ENCODE measurements at regions of chr10 and their contacts with region 1.

Region 1: GRCh38 chr10:67764012-67764822 is 68.2 kb upstream of the CTNNA3 start:
- DNase-seq: peak; percentile 93
- H3K4me3 Mint-ChIP-seq: peak overlapping the region; percentile 82
- H3K27ac Mint-ChIP-seq: peak overlapping the region; percentile 75
- H3K4me1 Mint-ChIP-seq: no peaks in the 10 kb centered on the region
- H3K27me3 Mint-ChIP-seq: no peaks in the 10 kb centered on the region
- CTCF ChIP-seq: no peak

Region 2: GRCh38 chr10:67602268-67602950 is 161.8 kb before region 1 on chr10:
- CTCF ChIA-PET with region 1: no interaction called
- POLR2A ChIA-PET with region 1: no interaction called
- intact Hi-C with region 1: loop called (anchors 10 kb)
- DNase-seq: peak; percentile 90
- H3K4me3 Mint-ChIP-seq: no peak overlapping the region
- H3K27ac Mint-ChIP-seq: no peak overlapping the region
- H3K4me1 Mint-ChIP-seq: peaks cover 25% of the 10 kb centered on the region
- H3K27me3 Mint-ChIP-seq: no peaks in the 10 kb centered on the region
- CTCF ChIP-seq: no peak

Measured in MCF 10A (cell line).